Endothelial cell of umbilical vein (primary cell): ENCODE measurements at regions of chr9 and their contacts with region 1.

Region 1: DNA sequence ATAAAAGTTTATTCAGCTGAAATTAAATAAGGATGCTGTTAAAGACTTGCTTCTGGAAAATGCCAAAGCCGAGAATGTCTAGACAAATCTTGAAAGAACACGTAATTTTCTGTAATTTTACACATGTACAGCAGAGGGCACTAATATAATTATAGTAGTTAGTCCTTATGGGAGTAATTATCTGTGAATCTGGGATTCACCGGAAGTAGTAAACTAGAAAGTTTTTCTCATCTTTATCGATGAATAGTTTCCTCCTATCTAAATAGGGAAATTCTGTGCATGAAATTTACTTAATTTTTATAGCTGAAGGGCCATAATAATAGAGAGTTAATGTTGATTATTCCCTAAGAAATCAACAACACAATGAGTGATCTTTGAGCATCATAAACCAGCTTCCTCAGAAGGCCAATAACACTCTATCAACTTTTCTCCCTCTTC is 18.4 kb upstream of the CNTLN start:
- DNase-seq: peak; percentile 46
- H3K4me3 ChIP-seq: no peak overlapping the region
- H3K27ac ChIP-seq: no peak overlapping the region
- H3K4me1 ChIP-seq: no peaks in the 10 kb centered on the region
- H3K27me3 ChIP-seq: no peaks in the 10 kb centered on the region
- CTCF ChIP-seq: no peak
- POLR2A ChIP-seq: no peak

Region 2: GRCh38 chr9:17045381-17045940 is 71.0 kb before region 1 on chr9:
- CTCF ChIA-PET with region 1: no interaction called
- POLR2A ChIA-PET with region 1: no interaction called
- dilution Hi-C with region 1: no loop called
- intact Hi-C with region 1: no loop called
- DNase-seq: no peak
- H3K4me3 ChIP-seq: no peak overlapping the region
- H3K27ac ChIP-seq: no peak overlapping the region
- H3K4me1 ChIP-seq: no peaks in the 10 kb centered on the region
- H3K27me3 ChIP-seq: peaks cover 0 to 2% of the 10 kb centered on the region in 2 experiments
- CTCF ChIP-seq: no peak
- POLR2A ChIP-seq: no peak

Region 3: DNA sequence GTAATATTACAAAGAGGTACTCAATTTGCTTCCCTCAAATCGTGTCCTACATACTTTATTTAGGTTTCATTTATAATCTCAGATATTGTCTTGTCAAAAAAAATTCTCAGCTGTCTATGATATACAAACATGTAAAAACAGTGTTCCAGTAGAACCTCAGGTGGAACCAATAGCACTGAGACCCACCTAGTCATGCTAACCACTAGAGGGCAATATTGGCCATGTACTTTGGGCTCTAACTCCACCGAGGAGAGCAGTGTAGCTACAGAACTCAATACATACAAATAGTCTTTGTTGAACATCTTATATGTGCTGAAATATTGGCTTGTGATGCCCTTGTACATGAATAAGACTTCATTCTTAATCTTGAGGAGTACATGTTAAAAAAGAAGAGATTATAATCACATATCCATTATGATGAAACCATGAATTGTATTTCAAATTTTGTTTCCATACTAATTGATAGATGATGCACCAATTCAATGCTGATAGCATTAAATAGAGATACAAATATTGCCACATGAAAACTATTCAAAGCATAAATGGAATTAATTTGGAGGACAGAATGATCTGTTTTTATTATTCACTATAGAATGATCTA is 52.8 kb before region 1 on chr9:
- CTCF ChIA-PET with region 1: interaction called, 15 read pairs
- POLR2A ChIA-PET with region 1: no interaction called
- dilution Hi-C with region 1: no loop called
- intact Hi-C with region 1: loop called (anchors 1 kb)
- DNase-seq: peak; percentile 61
- H3K4me3 ChIP-seq: no peak overlapping the region
- H3K27ac ChIP-seq: no peak overlapping the region
- H3K4me1 ChIP-seq: peaks cover 15% of the 10 kb centered on the region
- H3K27me3 ChIP-seq: no peaks in the 10 kb centered on the region
- CTCF ChIP-seq: peak; percentile 65 to 72
- POLR2A ChIP-seq: no peak

Region 4: DNA sequence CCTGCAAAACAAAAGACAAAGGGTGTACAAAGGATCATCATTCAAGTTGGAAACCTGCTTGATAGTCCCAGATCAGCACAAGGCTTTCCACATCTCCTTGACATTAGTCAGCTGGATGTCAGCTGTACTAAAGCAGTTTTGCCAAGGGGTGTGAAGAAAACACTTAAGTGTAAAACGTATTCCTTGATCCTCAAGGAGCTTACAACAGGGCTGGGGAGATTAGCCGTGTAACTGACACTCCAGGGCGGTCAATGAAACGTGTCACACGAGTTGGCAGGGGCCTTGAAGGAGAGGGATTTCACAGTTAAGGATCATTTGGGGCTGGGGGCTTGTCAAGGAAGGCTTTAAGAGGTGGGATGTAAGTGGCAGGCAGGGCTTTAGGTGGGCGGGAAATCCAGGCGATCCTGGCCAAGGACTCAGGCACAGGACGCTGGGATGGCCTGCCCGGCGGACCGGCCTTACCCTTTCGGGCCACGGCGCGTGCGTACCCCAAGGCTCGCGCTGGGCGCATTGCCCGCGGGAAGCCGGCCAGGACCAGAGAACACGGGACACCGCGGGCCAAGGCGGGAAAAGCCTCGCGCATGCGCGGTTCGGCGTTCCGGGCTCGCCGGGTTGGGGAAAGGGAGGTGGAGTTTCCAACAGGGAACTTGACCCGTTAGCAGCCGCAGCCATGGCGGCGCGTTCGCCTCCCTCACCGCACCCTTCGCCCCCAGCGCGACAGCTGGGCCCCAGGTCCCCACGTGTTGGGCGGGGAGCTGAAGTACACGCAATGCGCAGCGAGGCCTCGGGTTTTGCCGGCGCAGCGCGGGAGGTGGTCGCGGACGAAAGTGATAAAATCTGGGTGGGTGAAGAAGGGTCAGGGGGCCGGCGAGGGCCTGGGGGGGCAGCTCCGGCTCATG is 18.2 kb after region 1 on chr9 and contains the start of gene CNTLN:
- CTCF ChIA-PET with region 1: interaction called, 12 read pairs
- POLR2A ChIA-PET with region 1: no interaction called
- dilution Hi-C with region 1: no loop called
- intact Hi-C with region 1: no loop called
- DNase-seq: peak; percentile 94
- H3K4me3 ChIP-seq: peak within 1 kb of the TSS; percentile 84 to 94 (median 92)
- H3K27ac ChIP-seq: peak within 1 kb of the TSS; percentile 73
- H3K4me1 ChIP-seq: peaks cover 9% of the 10 kb centered on the region
- H3K27me3 ChIP-seq: no peaks in the 10 kb centered on the region
- CTCF ChIP-seq: no peak
- POLR2A ChIP-seq: peak; percentile 95
- total RNA-seq, gene CNTLN: 11.1 and 15.8 TPM in 2 replicates

Region 5: DNA sequence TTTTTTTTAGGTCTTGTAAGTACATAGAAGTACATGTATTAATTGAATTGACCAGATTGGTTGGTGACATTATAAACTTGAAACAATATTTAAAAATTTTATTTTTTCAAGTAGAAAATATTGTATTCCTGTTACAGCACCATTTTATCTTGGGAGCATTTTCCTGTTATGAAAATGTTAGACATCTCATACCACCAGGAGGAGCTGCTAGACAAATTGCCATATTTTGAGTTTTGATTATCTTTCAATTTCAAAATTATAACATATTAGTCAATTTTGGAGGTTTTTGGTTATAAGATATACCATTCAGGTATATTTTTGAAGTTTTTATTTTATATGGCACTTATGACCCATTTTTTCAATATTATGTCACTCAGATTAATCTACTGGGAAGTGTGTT is 102.8 kb after region 1 on chr9:
- CTCF ChIA-PET with region 1: interaction called, 10 read pairs
- POLR2A ChIA-PET with region 1: no interaction called
- dilution Hi-C with region 1: no loop called
- intact Hi-C with region 1: no loop called
- DNase-seq: peak; percentile 16
- H3K4me3 ChIP-seq: no peak overlapping the region
- H3K27ac ChIP-seq: no peak overlapping the region
- H3K4me1 ChIP-seq: no peaks in the 10 kb centered on the region
- H3K27me3 ChIP-seq: no peaks in the 10 kb centered on the region
- CTCF ChIP-seq: peak in 1 of 2 donors; percentile 18
- POLR2A ChIP-seq: no peak

Region 6: GRCh38 chr9:17402309-17402708 is 285.9 kb after region 1 on chr9:
- CTCF ChIA-PET with region 1: interaction called, 40 read pairs
- POLR2A ChIA-PET with region 1: no interaction called
- dilution Hi-C with region 1: no loop called
- intact Hi-C with region 1: loop called (anchors 1 kb)
- DNase-seq: peak; percentile 29
- H3K4me3 ChIP-seq: no peak overlapping the region
- H3K27ac ChIP-seq: no peak overlapping the region
- H3K4me1 ChIP-seq: peaks cover 8% of the 10 kb centered on the region
- H3K27me3 ChIP-seq: no peaks in the 10 kb centered on the region
- CTCF ChIP-seq: no peak
- POLR2A ChIP-seq: no peak

Region 7: DNA sequence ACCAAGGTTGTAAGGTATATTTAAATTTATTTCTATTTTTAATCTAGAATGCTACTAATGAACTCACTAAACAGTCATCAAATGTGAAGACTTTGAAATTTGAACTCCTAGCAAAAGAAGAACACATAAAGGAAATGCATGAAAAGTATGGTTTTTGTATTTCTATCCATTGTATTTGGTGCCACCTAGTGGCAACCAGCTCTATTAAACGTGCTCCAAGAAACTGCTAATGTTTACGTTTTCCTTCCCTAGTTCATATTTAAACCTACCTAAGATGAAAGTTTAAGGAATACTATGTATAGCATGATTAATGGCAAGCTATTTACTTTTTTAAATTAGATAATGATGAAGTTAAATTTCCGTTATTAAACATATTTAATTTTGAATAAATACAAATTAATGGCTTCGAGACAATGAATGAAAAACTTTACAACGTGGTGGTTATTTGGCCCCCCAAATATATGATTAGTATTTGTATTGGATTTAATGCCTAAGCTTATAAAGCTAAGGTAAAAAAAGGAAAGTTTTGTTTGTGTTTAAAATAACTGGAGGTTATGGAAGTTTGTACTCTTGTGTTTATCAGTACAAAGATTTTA is 346.5 kb after region 1 on chr9:
- CTCF ChIA-PET with region 1: interaction called, 117 read pairs
- POLR2A ChIA-PET with region 1: no interaction called
- dilution Hi-C with region 1: no loop called
- intact Hi-C with region 1: loop called (anchors 1 kb)
- DNase-seq: peak; percentile 68
- H3K4me3 ChIP-seq: no peak overlapping the region
- H3K27ac ChIP-seq: no peak overlapping the region
- H3K4me1 ChIP-seq: no peaks in the 10 kb centered on the region
- H3K27me3 ChIP-seq: no peaks in the 10 kb centered on the region
- CTCF ChIP-seq: peak; percentile 43 to 54
- POLR2A ChIP-seq: no peak